Activated CD4-positive, alpha-beta memory T cell treated with anti-CD3 and anti-CD28 coated beads for 36 hours (primary cell): ENCODE measurements at regions of chr1 and their contacts with region 1.

Region 1: DNA sequence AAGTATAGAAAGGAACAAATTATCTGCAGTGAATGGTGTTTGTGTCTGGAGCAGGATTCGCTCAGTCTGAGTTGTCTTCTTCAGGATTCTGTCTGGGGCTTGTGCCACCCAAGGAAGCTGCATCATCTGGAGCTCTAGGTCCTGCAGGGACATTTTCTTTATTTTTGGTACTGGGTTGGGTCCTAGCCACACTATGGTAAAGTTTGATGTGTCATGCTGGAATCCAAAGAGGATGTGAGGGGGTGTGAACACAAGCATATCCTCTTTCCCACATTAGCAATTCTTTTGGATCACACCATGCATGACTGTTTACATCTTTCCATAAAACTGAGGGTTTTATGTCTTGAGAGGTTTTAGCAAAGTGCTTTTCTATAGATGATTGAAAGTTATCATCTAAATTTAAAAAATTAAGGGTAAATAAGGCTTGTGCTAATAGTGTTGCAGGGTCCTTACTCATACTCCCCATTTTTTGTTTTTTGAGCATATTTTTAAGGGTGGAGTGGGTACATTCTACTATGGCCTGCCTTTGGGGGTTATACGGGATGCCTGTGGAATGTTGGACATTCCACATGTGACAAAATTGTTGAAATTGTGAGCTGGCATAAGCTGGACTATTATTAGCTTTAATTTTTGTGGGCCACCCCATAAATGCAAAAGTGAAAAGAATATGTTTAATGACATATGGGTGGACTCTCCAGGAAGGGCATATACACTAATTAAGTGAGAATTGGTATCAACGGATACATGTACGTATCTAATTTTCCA is 152.0 kb upstream of the HMCN1 start:
- DNase-seq: no peak
- H3K4me3 Mint-ChIP-seq: no peak overlapping the region
- H3K27ac Mint-ChIP-seq: no peak overlapping the region
- H3K4me1 Mint-ChIP-seq: no peaks in the 10 kb centered on the region
- H3K27me3 Mint-ChIP-seq: no peaks in the 10 kb centered on the region

Region 2: DNA sequence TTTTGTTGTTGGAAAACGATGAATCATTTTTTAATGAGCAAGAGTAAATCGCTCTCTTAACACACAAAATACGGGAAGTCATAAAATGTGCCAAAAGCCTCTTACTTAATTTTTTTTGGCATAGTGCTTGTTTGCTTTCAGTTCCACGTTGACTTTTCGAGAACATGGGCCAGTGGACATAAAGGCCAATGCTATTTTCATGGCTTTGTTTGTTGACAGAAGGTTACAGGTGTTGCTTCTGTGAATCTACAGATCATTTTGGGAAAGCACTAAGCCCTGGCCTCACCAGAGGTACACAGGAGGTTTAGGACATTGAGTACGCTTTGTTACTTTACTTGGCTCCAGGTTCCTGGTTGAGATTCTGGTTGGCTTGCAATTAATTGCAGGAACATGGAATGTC is 47.3 kb before region 1 on chr1:
- CTCF ChIA-PET with region 1: no interaction called
- POLR2A ChIA-PET with region 1: no interaction called
- intact Hi-C with region 1: loop called (anchors 5 kb)
- DNase-seq: no peak
- H3K4me3 Mint-ChIP-seq: no peak overlapping the region
- H3K27ac Mint-ChIP-seq: no peak overlapping the region
- H3K4me1 Mint-ChIP-seq: peaks cover 7% of the 10 kb centered on the region
- H3K27me3 Mint-ChIP-seq: no peaks in the 10 kb centered on the region

Region 3: DNA sequence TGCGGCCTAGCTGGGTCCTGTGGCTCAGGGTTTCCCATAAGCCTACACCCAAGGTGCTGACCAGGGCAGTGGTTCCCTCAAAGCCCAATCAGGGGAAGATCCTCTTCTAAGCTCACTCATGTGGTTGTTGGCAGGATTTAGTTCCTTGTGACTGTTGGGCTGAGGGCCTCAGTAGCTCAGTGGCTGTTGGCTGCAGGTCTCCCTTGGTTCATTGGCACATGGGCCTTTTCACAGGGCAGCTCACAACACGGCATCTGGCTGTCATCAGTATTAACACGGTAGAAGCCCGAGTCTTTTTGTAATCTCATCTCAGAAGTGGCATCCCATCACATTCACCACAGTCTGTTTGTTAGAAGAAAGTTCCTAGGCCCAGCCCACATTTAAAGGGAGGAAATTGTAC is 36.1 kb before region 1 on chr1:
- CTCF ChIA-PET with region 1: no interaction called
- POLR2A ChIA-PET with region 1: no interaction called
- intact Hi-C with region 1: no loop called
- DNase-seq: no peak
- H3K4me3 Mint-ChIP-seq: no peak overlapping the region
- H3K27ac Mint-ChIP-seq: no peak overlapping the region
- H3K4me1 Mint-ChIP-seq: no peaks in the 10 kb centered on the region
- H3K27me3 Mint-ChIP-seq: no peaks in the 10 kb centered on the region